ENCODE measurements at regions of chr9 and their contacts with region 1.

Region 1: GRCh38 chr9:95127249-95128176 is 190.0 kb downstream of the FANCC start:
- DNase-seq: peak; percentile 75
- H3K4me3 Mint-ChIP-seq: no peak overlapping the region
- H3K27ac Mint-ChIP-seq: no peak overlapping the region
- H3K4me1 Mint-ChIP-seq: peaks cover 1% of the 10 kb centered on the region
- H3K27me3 Mint-ChIP-seq: no peaks in the 10 kb centered on the region

Region 2: DNA sequence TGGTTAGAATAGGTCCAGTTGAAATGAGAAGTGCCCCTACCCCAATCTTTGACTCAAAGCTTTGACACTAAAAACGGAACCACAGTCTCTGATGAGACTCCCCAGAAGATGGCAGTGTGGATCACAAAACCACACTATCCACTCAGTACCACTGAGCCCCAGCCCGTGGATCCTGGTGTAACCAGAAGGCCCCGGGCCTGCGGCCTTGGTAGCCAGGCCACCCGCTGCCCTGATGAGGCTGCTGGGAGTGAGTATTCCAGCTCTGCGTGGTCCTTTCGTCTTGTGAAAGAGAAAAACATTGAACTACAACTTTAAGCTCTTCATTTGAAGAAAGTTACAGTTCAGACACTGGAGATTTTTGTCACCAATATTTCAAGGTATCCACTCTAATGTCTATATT is 446.0 kb before region 1 on chr9:
- CTCF ChIA-PET with region 1: interaction called, 23 read pairs
- POLR2A ChIA-PET with region 1: no interaction called
- DNase-seq: peak; percentile 69
- H3K4me3 Mint-ChIP-seq: no peak overlapping the region
- H3K27ac Mint-ChIP-seq: no peak overlapping the region
- H3K4me1 Mint-ChIP-seq: no peaks in the 10 kb centered on the region
- H3K27me3 Mint-ChIP-seq: peaks cover 34% of the 10 kb centered on the region